ENCODE measurements at regions of chr18 and their contacts with region 1.

Region 1: DNA sequence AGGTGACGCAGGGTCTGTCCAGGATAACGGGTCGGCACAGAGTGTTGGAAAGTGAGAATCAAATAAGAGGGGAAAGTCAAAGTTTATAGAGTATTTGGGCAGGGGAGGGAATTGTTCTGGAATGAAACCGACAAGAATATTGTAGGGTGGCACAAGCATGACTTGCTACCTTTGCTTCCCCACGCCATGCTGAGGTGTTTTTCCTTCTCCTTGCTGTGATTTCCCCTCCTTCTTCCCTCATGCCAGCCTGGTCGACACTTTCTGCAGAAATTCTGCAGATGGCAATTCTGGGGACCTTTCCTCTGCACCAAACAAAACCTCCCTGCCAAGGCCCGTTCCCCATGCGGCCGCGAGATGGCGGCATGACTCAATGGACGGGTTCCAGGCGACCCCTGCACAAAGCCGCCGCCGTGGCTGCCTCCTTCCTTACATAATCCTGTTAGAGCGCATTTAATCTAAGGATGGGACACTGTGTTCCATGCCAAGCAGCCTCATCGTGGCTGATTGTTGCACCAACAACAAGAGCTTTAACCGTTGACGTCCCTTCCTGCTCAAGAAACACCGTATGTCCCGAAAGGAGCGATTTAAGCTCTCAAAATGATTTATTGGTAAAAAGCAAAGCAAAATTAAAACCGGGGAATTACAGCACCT is at the start of gene MRO:
- DNase-seq: peak; percentile 87
- H3K4me3 ChIP-seq: peak within 1 kb of the TSS; percentile 59
- H3K27ac ChIP-seq: peak within 1 kb of the TSS; percentile 72
- H3K4me1 ChIP-seq: peaks cover 29% of the 10 kb centered on the region
- H3K27me3 ChIP-seq: no peaks in the 10 kb centered on the region
- CTCF ChIP-seq: peak; percentile 93
- total RNA-seq, gene MRO: 3.8 TPM

Region 2: GRCh38 chr18:50866765-50867164 is 46.9 kb after region 1 on chr18:
- intact Hi-C with region 1: no loop called
- DNase-seq: no peak
- H3K4me3 ChIP-seq: no peak overlapping the region
- H3K27ac ChIP-seq: peak overlapping the region; percentile 23
- H3K4me1 ChIP-seq: peaks cover 6% of the 10 kb centered on the region
- H3K27me3 ChIP-seq: no peaks in the 10 kb centered on the region
- CTCF ChIP-seq: peak; percentile 41

Region 3: GRCh38 chr18:51051105-51051712 is 231.4 kb after region 1 on chr18:
- intact Hi-C with region 1: loop called (anchors 10 kb)
- DNase-seq: no peak
- H3K4me3 ChIP-seq: no peak overlapping the region
- H3K27ac ChIP-seq: no peak overlapping the region
- H3K4me1 ChIP-seq: peaks cover 31% of the 10 kb centered on the region
- H3K27me3 ChIP-seq: no peaks in the 10 kb centered on the region
- CTCF ChIP-seq: peak; percentile 84

Measured in left ventricle myocardium inferior (tissue), 1 donor.